ENCODE measurements at regions of chr1 and their contacts with region 1.

Region 1: GRCh38 chr1:37682334-37682987 is 9.9 kb upstream of the CDCA8 start:
- DNase-seq: peak in 4 of 5 donors; percentile 47 to 69 (median 56)
- ATAC-seq: peak; percentile 58 to 78 (median 67)
- H3K4me3 ChIP-seq: no peak overlapping the region
- H3K27ac ChIP-seq: no peak overlapping the region
- H3K4me1 ChIP-seq: peaks cover 0 to 3% (median 0%) of the 10 kb centered on the region in 12 donors
- H3K27me3 ChIP-seq: no peaks in the 10 kb centered on the region
- CTCF ChIP-seq: peak; percentile 78 to 96 (median 84)
- POLR2A ChIP-seq: no peak

Region 2: DNA sequence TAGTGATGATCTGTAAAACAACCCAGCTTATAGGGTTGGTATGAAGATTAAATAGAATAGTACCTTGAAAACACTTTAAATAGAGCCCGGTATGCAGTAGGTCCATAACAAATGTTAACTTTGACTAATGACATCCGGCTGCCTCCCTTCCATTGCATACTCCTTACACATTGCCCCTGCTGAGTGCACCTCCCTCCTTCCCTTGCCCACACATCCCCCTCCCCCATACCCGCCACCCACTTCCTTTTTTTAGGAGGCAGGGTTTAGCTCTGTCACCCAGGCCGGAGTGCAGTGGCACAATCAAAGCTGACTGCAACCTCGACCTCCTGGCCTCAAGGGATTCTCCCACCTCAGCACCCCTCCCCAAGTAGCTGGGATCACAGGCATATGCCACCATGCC is 232.5 kb before region 1 on chr1:
- intact Hi-C with region 1: loop called (anchors 1 to 5 kb)
- DNase-seq: peak in 1 of 5 donors; percentile 38
- ATAC-seq: no peak
- H3K4me3 ChIP-seq: no peak overlapping the region
- H3K27ac ChIP-seq: no peak overlapping the region
- H3K4me1 ChIP-seq: peaks cover 0 to 11% (median under 1%) of the 10 kb centered on the region in 12 donors
- H3K27me3 ChIP-seq: peaks cover 0 to 32% (median 6%) of the 10 kb centered on the region in 9 donors
- CTCF ChIP-seq: no peak
- POLR2A ChIP-seq: no peak

Region 3: DNA sequence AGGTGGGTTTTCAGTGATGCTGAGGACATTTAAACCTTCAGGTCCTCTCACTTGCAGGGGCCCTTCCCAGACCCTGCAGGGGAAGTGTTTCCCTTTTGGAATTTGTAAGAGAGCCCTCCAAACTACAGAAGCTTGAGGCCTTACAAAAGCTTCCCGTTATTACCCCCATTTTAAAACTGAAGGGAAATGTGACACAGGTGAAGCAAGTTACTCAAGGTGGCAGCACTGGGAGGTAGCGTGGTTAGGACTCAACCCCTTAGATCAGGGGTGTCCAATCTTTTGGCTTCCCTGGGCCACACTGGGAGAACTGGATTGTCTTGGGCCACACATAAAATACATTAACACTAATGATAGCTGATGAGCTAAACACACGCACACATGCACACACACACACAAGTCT is 223.9 kb before region 1 on chr1:
- intact Hi-C with region 1: loop called (anchors 1 to 5 kb)
- DNase-seq: no peak
- ATAC-seq: no peak
- H3K4me3 ChIP-seq: no peak overlapping the region
- H3K27ac ChIP-seq: no peak overlapping the region
- H3K4me1 ChIP-seq: peaks cover 0 to 10% (median 4%) of the 10 kb centered on the region in 12 donors
- H3K27me3 ChIP-seq: no peaks in the 10 kb centered on the region
- CTCF ChIP-seq: no peak
- POLR2A ChIP-seq: no peak

Region 4: GRCh38 chr1:37602750-37603694 is 79.4 kb before region 1 on chr1:
- intact Hi-C with region 1: loop called (anchors 1 to 5 kb)
- DNase-seq: no peak
- ATAC-seq: peak in 2 of 4 donors; percentile 42 to 49
- H3K4me3 ChIP-seq: no peak overlapping the region
- H3K27ac ChIP-seq: no peak overlapping the region
- H3K4me1 ChIP-seq: peaks cover 0 to 4% (median 0%) of the 10 kb centered on the region in 12 donors
- H3K27me3 ChIP-seq: peaks cover 0 to 27% (median 3%) of the 10 kb centered on the region in 9 donors
- CTCF ChIP-seq: peak; percentile 37 to 67 (median 58)
- POLR2A ChIP-seq: no peak

Measured in heart left ventricle (tissue), 16 donors.